Naive thymus-derived CD4-positive, alpha-beta T cell (primary cell): ENCODE measurements at regions of chr19 and their contacts with region 1.

Region 1: GRCh38 chr19:13952154-13953035 is at the start of gene DCAF15:
- DNase-seq: peak; percentile 89 to 99 (median 99)
- ATAC-seq: peak; percentile 98
- H3K4me3 ChIP-seq: peak within 1 kb of the TSS; percentile 75
- H3K4me3 Mint-ChIP-seq: peak within 1 kb of the TSS; percentile 74 to 99 (median 93)
- H3K27ac ChIP-seq: peak within 1 kb of the TSS; percentile 90
- H3K27ac Mint-ChIP-seq: peak within 1 kb of the TSS; percentile 86 to 99 (median 91)
- H3K4me1 ChIP-seq: peaks cover 13 to 17% of the 10 kb centered on the region in 2 donors
- H3K4me1 Mint-ChIP-seq: peaks cover 5 to 24% (median 19%) of the 10 kb centered on the region in 7 donors
- H3K27me3 ChIP-seq: no peaks in the 10 kb centered on the region
- H3K27me3 Mint-ChIP-seq: no peaks in the 10 kb centered on the region
- total RNA-seq, gene DCAF15: 68.5 to 92.0 (median 87.2) TPM

Region 2: GRCh38 chr19:13905938-13906904 is 46.2 kb before region 1 on chr19 and contains the starts of genes BRME1 and CC2D1A:
- CTCF ChIA-PET with region 1: interaction called, 5 read pairs
- POLR2A ChIA-PET with region 1: interaction called, 8 read pairs
- intact Hi-C with region 1: loop called (anchors 1 kb)
- DNase-seq: peak; percentile 87 to 94 (median 92)
- ATAC-seq: peak; percentile 100
- H3K4me3 ChIP-seq: peak within 1 kb of the TSS; percentile 84
- H3K4me3 Mint-ChIP-seq: peak within 1 kb of the TSS; percentile 84 to 94 (median 88)
- H3K27ac ChIP-seq: peak within 1 kb of the TSS; percentile 77
- H3K27ac Mint-ChIP-seq: peak within 1 kb of the TSS; percentile 83 to 94 (median 91)
- H3K4me1 ChIP-seq: peaks cover 12% of the 10 kb centered on the region in 2 donors
- H3K4me1 Mint-ChIP-seq: peaks cover 12 to 29% (median 16%) of the 10 kb centered on the region in 7 donors
- H3K27me3 ChIP-seq: no peaks in the 10 kb centered on the region
- H3K27me3 Mint-ChIP-seq: no peaks in the 10 kb centered on the region
- total RNA-seq, gene BRME1: 1.8 to 13.7 (median 2.9) TPM
- total RNA-seq, gene CC2D1A: 21.0 to 33.1 (median 29.8) TPM

Region 3: GRCh38 chr19:13986348-13986904 is 34.0 kb after region 1 on chr19:
- CTCF ChIA-PET with region 1: interaction called, 3 read pairs
- POLR2A ChIA-PET with region 1: interaction called, 23 read pairs
- intact Hi-C with region 1: loop called (anchors 1 kb)
- DNase-seq: peak; percentile 94 to 98 (median 97)
- ATAC-seq: peak; percentile 94
- H3K4me3 ChIP-seq: peak overlapping the region; percentile 48
- H3K4me3 Mint-ChIP-seq: peak overlapping the region; percentile 61 to 85 (median 77)
- H3K27ac ChIP-seq: peak overlapping the region; percentile 97
- H3K27ac Mint-ChIP-seq: peak overlapping the region; percentile 92 to 99 (median 96)
- H3K4me1 ChIP-seq: peaks cover 39 to 65% of the 10 kb centered on the region in 2 donors
- H3K4me1 Mint-ChIP-seq: peaks cover 48 to 89% (median 66%) of the 10 kb centered on the region in 7 donors
- H3K27me3 ChIP-seq: no peaks in the 10 kb centered on the region
- H3K27me3 Mint-ChIP-seq: no peaks in the 10 kb centered on the region

Region 4: DNA sequence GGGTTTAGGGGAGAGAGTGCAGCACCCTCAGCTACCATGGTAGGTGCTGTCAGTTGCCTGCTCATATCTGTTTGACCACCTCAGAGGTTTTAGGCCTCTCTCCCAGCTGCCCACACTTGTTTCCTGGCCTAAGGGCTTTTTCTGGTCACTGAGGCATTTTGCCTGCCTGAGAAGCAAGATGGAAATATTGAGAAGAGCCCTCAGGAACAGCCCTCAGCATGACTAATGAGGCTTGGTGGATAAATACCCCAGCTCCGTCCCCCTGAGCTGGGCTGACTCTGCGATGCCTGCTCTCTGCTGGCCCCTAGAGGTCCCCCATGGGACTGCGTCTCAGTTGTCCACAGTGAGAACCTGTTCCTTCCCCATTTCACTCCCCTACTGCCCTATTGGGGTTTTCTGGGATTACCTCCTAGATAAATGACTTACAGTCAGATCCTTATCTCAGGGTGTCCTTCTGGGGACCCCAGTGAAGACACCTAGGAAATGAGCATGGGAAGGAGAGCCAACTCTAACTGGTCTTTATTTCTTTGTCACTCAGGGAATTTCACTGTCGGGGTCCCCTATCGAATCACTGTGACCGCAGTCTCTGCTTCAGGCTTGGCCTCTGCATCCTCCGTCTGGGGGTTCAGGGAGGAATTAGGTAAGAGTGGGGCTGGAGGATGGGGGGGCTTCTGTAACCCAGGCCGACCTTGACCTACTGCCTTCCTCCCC is 96.2 kb after region 1 on chr19:
- CTCF ChIA-PET with region 1: interaction called, 9 read pairs
- POLR2A ChIA-PET with region 1: interaction called, 5 read pairs
- intact Hi-C with region 1: loop called in 1 of 2 experiments (anchors 5 kb)
- DNase-seq: peak; percentile 46 to 80 (median 67)
- ATAC-seq: peak; percentile 96
- H3K4me3 ChIP-seq: no peak overlapping the region
- H3K4me3 Mint-ChIP-seq: no peak overlapping the region
- H3K27ac ChIP-seq: peak overlapping the region; percentile 42
- H3K27ac Mint-ChIP-seq: peak overlapping the region in 8 of 9 donors; percentile 21 to 77 (median 61)
- H3K4me1 ChIP-seq: peaks cover 0 to 4% of the 10 kb centered on the region in 2 donors
- H3K4me1 Mint-ChIP-seq: peaks cover 0 to 5% (median 0%) of the 10 kb centered on the region in 7 donors
- H3K27me3 ChIP-seq: no peaks in the 10 kb centered on the region
- H3K27me3 Mint-ChIP-seq: no peaks in the 10 kb centered on the region

Region 5: GRCh38 chr19:14081325-14082093 is 129.1 kb after region 1 on chr19:
- CTCF ChIA-PET with region 1: no interaction called
- POLR2A ChIA-PET with region 1: no interaction called
- intact Hi-C with region 1: loop called in 1 of 2 experiments (anchors 2 kb)
- DNase-seq: peak; percentile 96 to 100 (median 99)
- ATAC-seq: peak; percentile 97
- H3K4me3 ChIP-seq: peak overlapping the region; percentile 86
- H3K4me3 Mint-ChIP-seq: peak overlapping the region; percentile 80 to 98 (median 94)
- H3K27ac ChIP-seq: peak overlapping the region; percentile 80
- H3K27ac Mint-ChIP-seq: peak overlapping the region; percentile 86 to 98 (median 95)
- H3K4me1 ChIP-seq: peaks cover 5 to 15% of the 10 kb centered on the region in 2 donors
- H3K4me1 Mint-ChIP-seq: peaks cover 0 to 27% (median 17%) of the 10 kb centered on the region in 7 donors
- H3K27me3 ChIP-seq: no peaks in the 10 kb centered on the region
- H3K27me3 Mint-ChIP-seq: no peaks in the 10 kb centered on the region

Region 6: DNA sequence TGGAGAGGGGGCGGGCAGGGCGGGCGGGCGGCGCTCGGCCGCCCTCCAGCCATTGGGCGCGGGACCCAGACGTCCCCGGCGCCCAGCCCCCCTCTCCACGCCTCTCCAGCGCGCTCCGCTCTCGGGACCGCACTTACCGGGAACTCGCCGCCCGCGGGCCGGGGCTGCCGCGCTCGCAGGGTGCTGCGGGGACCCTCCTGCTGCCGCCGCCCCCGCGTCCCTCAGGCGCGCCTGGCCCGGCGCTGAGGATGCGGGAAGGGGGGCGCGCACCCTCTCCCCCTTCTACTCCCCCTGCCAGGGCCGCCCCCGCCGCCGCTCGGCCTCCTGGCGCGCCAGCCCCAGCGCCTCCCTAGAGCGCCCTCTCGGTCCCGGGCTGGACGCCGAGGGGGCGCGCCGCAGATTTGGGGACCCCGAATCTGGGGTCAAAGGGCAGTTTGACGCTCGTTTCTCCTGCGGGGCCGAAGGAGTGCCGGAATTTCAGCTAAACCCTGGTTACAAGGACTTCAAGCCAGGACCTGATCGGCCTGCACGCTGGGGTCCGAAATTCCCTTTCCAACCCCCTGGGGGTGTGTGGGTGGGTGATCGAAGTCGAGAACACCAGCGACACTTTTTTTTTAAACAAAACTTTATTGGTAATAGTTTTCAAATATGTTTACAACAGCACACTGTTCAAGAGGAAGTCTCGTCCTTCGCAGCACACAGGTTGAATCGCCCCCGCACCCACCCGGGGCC is 138.9 kb after region 1 on chr19:
- CTCF ChIA-PET with region 1: no interaction called
- POLR2A ChIA-PET with region 1: no interaction called
- intact Hi-C with region 1: loop called in 1 of 2 experiments (anchors 1 kb)
- DNase-seq: peak; percentile 56 to 89 (median 84)
- ATAC-seq: peak; percentile 71
- H3K4me3 ChIP-seq: peak overlapping the region; percentile 99
- H3K4me3 Mint-ChIP-seq: peak overlapping the region; percentile 81 to 100 (median 98)
- H3K27ac ChIP-seq: peak overlapping the region; percentile 89
- H3K27ac Mint-ChIP-seq: peak overlapping the region; percentile 89 to 100 (median 98)
- H3K4me1 ChIP-seq: peaks cover 8 to 10% of the 10 kb centered on the region in 2 donors
- H3K4me1 Mint-ChIP-seq: peaks cover 13 to 21% (median 18%) of the 10 kb centered on the region in 7 donors
- H3K27me3 ChIP-seq: no peaks in the 10 kb centered on the region
- H3K27me3 Mint-ChIP-seq: no peaks in the 10 kb centered on the region

Region 7: GRCh38 chr19:14117668-14118164 is 165.3 kb after region 1 on chr19 and contains the start of gene PRKACA:
- CTCF ChIA-PET with region 1: no interaction called
- POLR2A ChIA-PET with region 1: no interaction called
- intact Hi-C with region 1: loop called in 1 of 2 experiments (anchors 5 kb)
- DNase-seq: peak; percentile 93 to 99 (median 98)
- ATAC-seq: peak; percentile 93
- H3K4me3 ChIP-seq: peak within 1 kb of the TSS; percentile 67
- H3K4me3 Mint-ChIP-seq: peak within 1 kb of the TSS; percentile 92 to 98 (median 95)
- H3K27ac ChIP-seq: peak within 1 kb of the TSS; percentile 87
- H3K27ac Mint-ChIP-seq: peak within 1 kb of the TSS; percentile 92 to 99 (median 97)
- H3K4me1 ChIP-seq: peaks cover 15 to 46% of the 10 kb centered on the region in 2 donors
- H3K4me1 Mint-ChIP-seq: peaks cover 20 to 56% (median 46%) of the 10 kb centered on the region in 7 donors
- H3K27me3 ChIP-seq: no peaks in the 10 kb centered on the region
- H3K27me3 Mint-ChIP-seq: no peaks in the 10 kb centered on the region
- total RNA-seq, gene PRKACA: 41.3 to 101 (median 63.1) TPM